PC-9 (cell line): ENCODE measurements at regions of chr12 and their contacts with region 1.

Region 1: DNA sequence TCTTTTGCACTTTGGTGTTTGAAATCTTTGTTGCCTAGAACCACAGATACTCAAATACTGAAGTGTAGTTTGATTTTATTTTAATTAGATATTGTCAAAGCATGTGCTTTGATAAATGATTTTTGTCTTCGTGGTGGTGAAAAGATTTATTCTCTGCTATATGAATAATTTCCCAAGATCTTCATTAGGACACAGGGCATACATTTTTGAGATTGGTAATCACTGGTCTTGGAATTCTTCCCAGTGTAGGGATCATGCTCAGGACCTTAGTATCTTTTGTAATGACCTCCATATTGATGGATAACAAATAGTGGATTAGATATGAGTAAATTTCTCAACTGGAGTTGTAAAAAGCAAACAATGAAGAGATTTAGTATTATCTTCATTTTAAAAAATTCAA is 28.2 kb downstream of the TBK1 start:
- DNase-seq: no peak
- H3K4me3 ChIP-seq: no peak overlapping the region
- H3K27ac ChIP-seq: no peak overlapping the region
- H3K4me1 ChIP-seq: no peaks in the 10 kb centered on the region
- H3K27me3 ChIP-seq: no peaks in the 10 kb centered on the region
- CTCF ChIP-seq: no peak

Region 2: GRCh38 chr12:64427988-64428387 is 52.2 kb before region 1 on chr12:
- CTCF ChIA-PET with region 1: no interaction called
- POLR2A ChIA-PET with region 1: no interaction called
- intact Hi-C with region 1: loop called (anchors 5 kb)
- DNase-seq: no peak
- H3K4me3 ChIP-seq: no peak overlapping the region
- H3K27ac ChIP-seq: no peak overlapping the region
- H3K4me1 ChIP-seq: no peaks in the 10 kb centered on the region
- H3K27me3 ChIP-seq: no peaks in the 10 kb centered on the region
- CTCF ChIP-seq: no peak

Region 3: GRCh38 chr12:66288121-66288520 is 1808.0 kb after region 1 on chr12:
- CTCF ChIA-PET with region 1: no interaction called
- POLR2A ChIA-PET with region 1: no interaction called
- intact Hi-C with region 1: no loop called
- DNase-seq: no peak
- H3K4me3 ChIP-seq: no peak overlapping the region
- H3K27ac ChIP-seq: no peak overlapping the region
- H3K4me1 ChIP-seq: no peaks in the 10 kb centered on the region
- H3K27me3 ChIP-seq: no peaks in the 10 kb centered on the region
- CTCF ChIP-seq: no peak